ENCODE measurements at regions of chr2 and their contacts with region 1.

Region 1: GRCh38 chr2:231900486-231900942 is 25.7 kb downstream of the NPPC start:
- DNase-seq: no peak
- H3K4me3 ChIP-seq: no peak overlapping the region
- H3K27me3 ChIP-seq: peaks cover 5% of the 10 kb centered on the region
- CTCF ChIP-seq: peak; percentile 95

Region 2: DNA sequence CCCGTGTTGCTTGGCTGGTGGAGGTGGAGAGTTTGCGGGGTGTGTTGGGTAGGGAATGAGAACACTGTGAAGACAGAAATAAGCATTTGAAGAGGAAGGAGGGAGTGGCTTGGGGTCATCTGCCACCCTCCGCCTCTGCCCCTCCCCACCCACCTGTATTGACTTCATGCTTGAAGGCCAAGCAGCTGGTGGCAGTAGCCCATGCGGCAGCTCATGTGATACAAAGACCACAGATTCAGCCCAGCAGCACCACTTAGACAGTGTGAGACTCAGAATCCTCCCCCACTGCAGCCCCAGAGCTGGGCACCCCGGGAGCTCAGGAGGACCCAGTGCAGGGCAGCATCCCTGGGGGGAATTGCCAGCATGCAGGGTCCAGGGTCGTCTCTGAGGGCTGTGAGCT is 10.3 kb after region 1 on chr2:
- CTCF ChIA-PET with region 1: interaction called, 11 read pairs
- POLR2A ChIA-PET with region 1: no interaction called
- DNase-seq: no peak
- H3K4me3 ChIP-seq: no peak overlapping the region
- H3K27me3 ChIP-seq: no peaks in the 10 kb centered on the region
- CTCF ChIP-seq: no peak

Region 3: DNA sequence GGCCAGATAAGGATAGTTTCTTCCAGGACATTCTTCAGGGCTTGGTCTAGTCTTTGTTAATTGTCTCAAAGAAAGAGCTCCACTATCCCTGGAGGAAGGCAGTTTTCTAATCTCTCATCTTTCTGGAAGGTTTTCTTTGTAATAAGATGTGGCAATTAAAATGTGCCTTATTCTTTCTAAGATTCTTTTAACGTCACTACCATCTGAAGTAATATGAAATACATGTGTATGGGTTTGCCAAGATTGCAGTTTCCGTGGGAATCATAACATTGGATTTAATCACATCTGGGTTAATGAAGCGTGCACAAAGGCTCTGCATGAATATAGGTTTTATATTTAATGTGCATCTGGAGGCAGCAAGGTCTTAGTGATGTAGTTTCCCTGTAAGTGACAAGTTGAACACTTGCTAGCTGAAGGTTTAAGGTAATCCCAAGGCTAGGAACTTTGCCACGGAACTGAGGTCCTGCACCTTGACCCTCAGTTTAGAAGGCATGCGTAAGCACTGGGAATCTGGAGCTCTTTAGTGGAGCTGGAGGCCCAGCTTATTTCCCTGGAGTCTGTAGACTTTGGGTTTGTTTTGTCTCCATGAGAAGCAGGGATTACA is 86.7 kb after region 1 on chr2:
- CTCF ChIA-PET with region 1: no interaction called
- POLR2A ChIA-PET with region 1: no interaction called
- DNase-seq: no peak
- H3K4me3 ChIP-seq: no peak overlapping the region
- H3K27me3 ChIP-seq: no peaks in the 10 kb centered on the region
- CTCF ChIP-seq: no peak

Region 4: DNA sequence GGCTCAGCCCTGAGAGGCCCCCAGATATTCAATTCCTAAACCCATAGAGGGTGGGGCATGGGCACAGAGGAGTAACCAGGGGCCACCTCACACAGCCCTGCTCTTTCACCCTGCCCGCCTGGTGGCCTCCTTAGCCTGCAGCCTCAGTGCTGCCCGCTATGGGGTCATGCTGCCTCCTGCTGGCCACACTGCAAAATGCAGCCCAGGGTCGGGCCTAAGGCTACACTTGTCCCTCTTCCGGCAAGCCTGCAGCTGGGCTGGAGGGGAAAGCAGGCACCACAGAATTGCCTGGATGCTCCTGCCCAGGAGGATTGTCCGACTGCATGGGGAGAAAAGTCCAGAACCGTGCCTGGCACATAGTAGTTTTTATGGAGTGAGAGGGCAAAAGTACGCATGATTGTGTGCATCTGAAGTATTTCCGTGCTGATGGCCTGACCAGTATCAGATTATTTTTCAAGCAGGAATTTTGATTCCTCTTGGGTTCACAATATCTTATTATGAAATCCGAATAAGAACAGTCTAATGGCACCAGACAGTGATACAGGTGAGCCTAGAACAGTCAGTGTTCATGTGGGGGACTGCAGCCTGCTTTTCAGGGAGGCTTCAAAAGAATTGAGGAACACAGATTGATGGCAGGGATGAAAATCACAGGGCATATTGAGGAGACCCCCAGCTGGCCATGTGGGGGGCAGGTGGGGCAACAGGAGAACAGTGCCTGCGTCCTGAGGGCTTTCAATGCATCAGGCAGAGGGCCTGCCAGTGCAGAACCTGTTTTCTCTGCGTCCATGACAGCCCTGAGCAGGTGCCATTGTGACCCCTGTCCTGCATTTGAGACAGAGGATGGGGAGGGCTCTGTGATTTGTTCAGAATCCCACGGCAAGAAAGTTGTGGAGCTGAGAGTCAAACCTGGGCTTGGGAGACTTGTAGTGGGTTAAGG is 426.9 kb after region 1 on chr2:
- CTCF ChIA-PET with region 1: interaction called, 24 read pairs
- POLR2A ChIA-PET with region 1: no interaction called
- DNase-seq: peak; percentile 0
- H3K4me3 ChIP-seq: no peak overlapping the region
- H3K27me3 ChIP-seq: no peaks in the 10 kb centered on the region
- CTCF ChIP-seq: peak; percentile 78

Region 5: GRCh38 chr2:232438951-232439757 is 538.6 kb after region 1 on chr2:
- CTCF ChIA-PET with region 1: interaction called, 35 read pairs
- POLR2A ChIA-PET with region 1: no interaction called
- DNase-seq: no peak
- H3K4me3 ChIP-seq: no peak overlapping the region
- H3K27me3 ChIP-seq: peaks cover 1% of the 10 kb centered on the region; the same call in 1 of the 2 replicates
- CTCF ChIP-seq: peak; percentile 49; the same call in 1 of the 2 replicates